ENCODE measurements at regions of chr19 and their contacts with region 1.

Region 1: GRCh38 chr19:13846557-13847406 is 30.2 kb upstream of the NANOS3 start:
- DNase-seq: peak; percentile 92
- CTCF ChIP-seq: no peak

Region 2: DNA sequence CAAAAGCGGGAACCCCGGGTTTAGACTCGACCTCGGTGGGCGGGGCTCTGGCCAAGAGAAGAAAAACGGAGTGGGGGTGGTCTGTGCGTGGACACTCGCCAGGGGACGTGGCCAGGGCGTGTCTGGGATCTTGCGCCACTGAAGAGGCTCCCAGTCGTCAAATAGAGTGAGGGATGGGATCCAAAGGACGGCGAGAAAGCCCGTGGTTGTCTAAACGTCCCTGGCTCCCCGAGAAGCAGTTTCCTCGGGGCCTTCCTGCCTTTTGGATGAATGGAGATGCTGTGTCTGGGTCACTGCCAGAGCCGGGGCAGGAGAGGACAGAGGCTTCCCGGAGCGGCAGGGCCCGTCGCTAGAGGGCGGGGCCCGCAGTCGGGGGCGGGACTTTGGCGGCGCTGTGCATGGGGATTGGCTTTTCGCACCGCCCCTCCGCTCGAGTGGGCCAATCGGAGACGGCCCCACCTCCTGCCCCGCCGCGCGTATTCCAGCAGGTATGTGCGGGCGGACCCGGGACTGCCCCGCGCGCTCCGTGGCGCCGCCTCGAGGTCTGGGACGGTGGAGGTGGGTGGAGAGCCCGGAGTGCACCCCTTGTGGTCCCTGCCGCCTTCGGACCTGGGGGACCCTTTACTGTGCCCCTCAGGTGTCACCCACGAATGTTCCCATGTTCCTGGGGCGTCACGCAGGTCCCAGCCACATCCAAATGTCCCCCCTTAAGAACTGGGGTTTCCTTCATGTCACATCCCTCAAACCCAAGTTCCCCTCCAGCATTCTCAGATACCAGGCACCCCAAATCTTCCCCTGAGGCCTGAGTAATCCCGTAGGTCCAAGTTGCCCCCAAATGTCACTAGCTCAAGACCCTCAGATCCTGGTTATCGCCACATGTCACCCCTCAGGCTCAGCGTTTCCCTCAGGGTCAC is 13.2 kb before region 1 on chr19:
- CTCF ChIA-PET with region 1: interaction called, 4 read pairs
- POLR2A ChIA-PET with region 1: interaction called, 23 read pairs
- DNase-seq: peak; percentile 98
- CTCF ChIP-seq: peak; percentile 66

Region 3: DNA sequence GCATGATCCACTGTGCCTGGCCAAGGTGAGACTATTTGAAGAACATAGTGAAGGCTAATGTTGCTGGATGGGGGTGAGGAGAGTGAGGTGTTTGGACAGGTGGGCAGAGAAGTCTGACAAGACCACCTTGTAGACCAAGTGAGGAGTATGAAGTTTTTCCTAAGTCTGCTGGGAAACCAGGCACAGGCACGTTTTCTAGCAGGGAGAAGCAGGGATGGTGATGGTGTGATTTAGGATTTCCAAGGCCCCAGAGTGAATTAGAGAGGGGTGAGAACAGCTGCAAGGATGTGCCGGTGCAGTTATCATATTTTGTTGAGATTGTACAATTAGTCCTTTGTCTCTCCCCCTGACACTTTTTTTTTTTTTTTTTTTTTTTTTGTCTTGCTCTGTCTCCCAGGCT is 580.7 kb after region 1 on chr19:
- CTCF ChIA-PET with region 1: no interaction called
- POLR2A ChIA-PET with region 1: interaction called, 10 read pairs
- DNase-seq: no peak
- CTCF ChIP-seq: no peak

Measured in GM10248 (cell line).